ENCODE measurements at regions of chr12 and their contacts with region 1.

Region 1: GRCh38 chr12:109612975-109613502 is 39.4 kb downstream of the MVK start:
- DNase-seq: no peak
- ATAC-seq: peak; percentile 83
- H3K4me3 ChIP-seq: no peak overlapping the region
- H3K27ac ChIP-seq: no peak overlapping the region
- H3K4me1 ChIP-seq: no peaks in the 10 kb centered on the region
- H3K27me3 ChIP-seq: peaks cover 6% of the 10 kb centered on the region
- CTCF ChIP-seq: no peak; the same call in 1 of the 2 replicates

Region 2: GRCh38 chr12:109588461-109589239 is 24.4 kb before region 1 on chr12:
- CTCF ChIA-PET with region 1: no interaction called
- POLR2A ChIA-PET with region 1: no interaction called
- in situ Hi-C with region 1: no loop called
- intact Hi-C with region 1: loop called (anchors 1 kb)
- DNase-seq: no peak
- ATAC-seq: no peak
- H3K4me3 ChIP-seq: no peak overlapping the region
- H3K27ac ChIP-seq: no peak overlapping the region
- H3K4me1 ChIP-seq: no peaks in the 10 kb centered on the region
- H3K27me3 ChIP-seq: no peaks in the 10 kb centered on the region
- CTCF ChIP-seq: no peak

Region 3: GRCh38 chr12:109625131-109625559 is 12.1 kb after region 1 on chr12:
- CTCF ChIA-PET with region 1: no interaction called
- POLR2A ChIA-PET with region 1: no interaction called
- in situ Hi-C with region 1: no loop called
- intact Hi-C with region 1: no loop called
- DNase-seq: no peak
- ATAC-seq: peak; percentile 24; the same call in 1 of the 2 replicates
- H3K4me3 ChIP-seq: no peak overlapping the region
- H3K27ac ChIP-seq: no peak overlapping the region
- H3K4me1 ChIP-seq: no peaks in the 10 kb centered on the region
- H3K27me3 ChIP-seq: peaks cover 12% of the 10 kb centered on the region
- CTCF ChIP-seq: no peak